ENCODE measurements at regions of chr6 and their contacts with region 1.

Region 1: DNA sequence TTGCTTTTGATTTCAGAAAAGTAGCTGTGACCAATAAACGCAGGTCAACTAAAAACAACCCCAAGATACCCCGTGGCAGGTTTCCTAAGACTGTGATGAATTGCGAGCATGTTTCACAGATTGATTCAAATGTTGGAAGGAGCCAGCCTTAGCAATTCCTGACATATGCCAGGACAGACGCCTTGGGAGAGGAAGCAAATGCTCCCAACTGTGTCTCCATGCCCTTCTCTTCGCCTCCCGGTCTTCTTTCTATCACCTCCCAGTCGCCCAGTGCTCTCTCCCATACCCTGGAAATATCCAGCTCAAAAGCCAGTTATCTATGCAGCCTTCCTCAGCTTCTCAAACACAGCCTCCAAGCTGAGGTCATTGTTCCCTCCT is 32.0 kb downstream of the KIAA0319 start:
- DNase-seq: no peak
- H3K4me3 ChIP-seq: no peak overlapping the region
- H3K27ac ChIP-seq: no peak overlapping the region
- H3K4me1 ChIP-seq: no peaks in the 10 kb centered on the region
- H3K27me3 ChIP-seq: no peaks in the 10 kb centered on the region
- CTCF ChIP-seq: no peak

Region 2: DNA sequence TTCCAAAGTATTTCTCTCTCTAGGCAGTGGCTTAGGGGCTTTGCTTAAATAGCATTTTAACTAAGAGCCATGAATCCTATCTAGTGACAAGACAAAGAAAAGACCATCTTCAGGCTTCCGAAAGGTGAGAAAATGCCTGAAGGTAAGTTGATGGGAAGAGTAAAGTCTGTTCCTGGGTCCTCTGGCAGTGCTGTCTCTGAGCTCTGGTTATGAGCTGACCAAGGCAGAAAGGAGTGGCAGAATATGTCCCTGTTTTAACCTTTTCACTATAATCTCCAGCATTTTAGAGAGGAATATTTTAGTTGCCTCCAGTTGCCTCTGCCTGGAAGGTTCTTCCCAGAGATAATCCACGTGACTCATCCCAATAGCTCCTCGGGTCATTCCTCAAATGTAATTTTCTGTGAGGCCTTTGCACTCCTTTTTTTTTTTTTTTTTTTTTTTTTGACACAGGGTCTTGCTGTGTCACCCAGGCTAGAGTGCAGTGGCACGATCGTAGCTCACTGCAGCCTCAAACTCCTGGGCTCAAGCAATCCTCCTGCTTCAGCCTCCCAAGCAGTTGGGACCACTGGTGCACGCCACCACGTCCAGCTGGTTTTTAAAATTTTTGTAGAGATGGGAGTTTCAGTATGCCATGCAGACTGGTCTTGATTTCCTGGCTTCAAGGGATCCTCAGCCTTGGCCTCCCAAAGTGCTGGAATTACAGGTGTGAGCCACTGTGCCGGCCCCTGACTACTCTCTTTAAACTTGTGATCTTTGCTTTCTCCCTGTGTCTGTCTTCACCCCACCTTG is 188.4 kb after region 1 on chr6:
- CTCF ChIA-PET with region 1: no interaction called
- POLR2A ChIA-PET with region 1: no interaction called
- intact Hi-C with region 1: no loop called
- DNase-seq: peak in 1 of 2 experiments; percentile 41
- H3K4me3 ChIP-seq: no peak overlapping the region
- H3K27ac ChIP-seq: no peak overlapping the region; the same call in 1 of the 2 replicates
- H3K4me1 ChIP-seq: peaks cover 4% of the 10 kb centered on the region; the same call in 1 of the 2 replicates
- H3K27me3 ChIP-seq: no peaks in the 10 kb centered on the region
- CTCF ChIP-seq: no peak

Region 3: GRCh38 chr6:24991810-24992467 is 377.9 kb after region 1 on chr6:
- CTCF ChIA-PET with region 1: no interaction called
- POLR2A ChIA-PET with region 1: no interaction called
- intact Hi-C with region 1: no loop called
- DNase-seq: peak in 1 of 2 experiments; percentile 42
- H3K4me3 ChIP-seq: no peak overlapping the region
- H3K27ac ChIP-seq: no peak overlapping the region
- H3K4me1 ChIP-seq: peaks cover 11% of the 10 kb centered on the region
- H3K27me3 ChIP-seq: no peaks in the 10 kb centered on the region
- CTCF ChIP-seq: peak; percentile 86

Region 4: GRCh38 chr6:25042536-25043282 is 428.7 kb after region 1 on chr6:
- CTCF ChIA-PET with region 1: interaction called, 10 read pairs
- POLR2A ChIA-PET with region 1: no interaction called
- intact Hi-C with region 1: no loop called
- DNase-seq: no peak
- H3K4me3 ChIP-seq: no peak overlapping the region
- H3K27ac ChIP-seq: no peak overlapping the region
- H3K4me1 ChIP-seq: no peaks in the 10 kb centered on the region
- H3K27me3 ChIP-seq: no peaks in the 10 kb centered on the region
- CTCF ChIP-seq: no peak

Measured in PC-9 (cell line).